ENCODE measurements at regions of chr18 and their contacts with region 1.

Region 1: DNA sequence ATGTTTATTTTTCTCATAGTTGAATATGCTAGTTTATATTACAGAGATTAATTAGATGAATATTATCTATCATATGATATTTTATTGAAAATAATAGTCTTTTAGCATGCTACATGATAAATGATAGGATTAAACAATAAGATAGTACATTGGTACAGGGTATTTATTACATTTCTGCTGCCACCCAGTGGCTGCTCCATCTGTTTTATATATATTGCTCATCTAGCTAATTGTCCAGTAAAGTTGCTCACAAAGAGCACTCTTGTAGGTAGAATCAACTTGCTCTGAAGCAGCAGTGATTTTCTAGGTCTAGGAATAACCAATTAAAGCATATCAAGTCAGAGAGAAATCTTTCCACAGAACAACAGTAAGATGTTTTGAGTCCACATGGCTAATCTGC is 183.3 kb downstream of the ASXL3 start:
- DNase-seq: peak; percentile 38
- ATAC-seq: peak; percentile 55

Region 2: DNA sequence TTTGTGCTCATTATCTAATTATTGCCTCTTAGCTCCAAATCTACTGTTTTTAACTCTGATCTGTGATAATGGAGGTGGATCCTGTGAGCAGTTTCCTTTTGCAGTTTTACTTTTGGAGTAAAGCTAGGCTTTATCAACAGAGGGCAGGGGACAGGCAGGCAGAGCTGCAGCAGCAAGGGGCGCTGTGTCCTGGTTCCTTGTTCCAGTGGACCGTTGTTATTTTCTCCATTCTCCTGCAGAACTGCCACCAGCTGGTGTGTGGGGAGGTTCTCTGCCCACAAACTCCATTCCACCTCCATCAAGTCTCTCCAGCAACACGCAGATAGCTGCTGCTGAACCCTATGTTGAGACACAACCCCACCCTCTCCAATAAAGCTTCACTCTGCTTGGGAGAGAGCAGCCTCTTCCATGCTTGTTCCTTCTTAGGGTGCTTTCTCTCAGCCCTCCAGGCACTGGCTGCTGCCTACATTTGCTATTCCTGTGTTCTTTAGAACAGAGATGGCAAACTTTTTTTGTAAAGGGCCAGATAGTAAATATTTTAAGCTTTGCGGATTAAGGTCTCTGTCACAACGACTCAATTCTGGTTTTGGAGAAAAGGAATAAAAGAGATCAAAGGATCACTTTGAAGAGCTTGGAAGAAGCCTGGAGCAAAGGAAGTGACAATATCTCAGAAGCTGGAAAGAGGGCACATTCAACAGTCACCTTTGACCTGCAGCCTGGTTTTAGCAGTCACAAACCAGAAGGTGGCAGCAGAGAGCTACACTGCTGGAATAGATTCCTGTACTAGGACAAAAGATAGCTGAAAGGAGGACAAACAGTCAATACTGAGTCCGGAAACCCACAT is 529.7 kb before region 1 on chr18:
- intact Hi-C with region 1: loop called (anchors 5 kb)
- DNase-seq: peak; percentile 47
- ATAC-seq: peak; percentile 82

Region 3: GRCh38 chr18:33440060-33441043 is 321.0 kb before region 1 on chr18 and contains the start of gene CCDC178:
- intact Hi-C with region 1: loop called (anchors 5 kb)
- DNase-seq: peak; percentile 46
- ATAC-seq: peak; percentile 95
- total RNA-seq, gene CCDC178: 0.35 TPM

Region 4: DNA sequence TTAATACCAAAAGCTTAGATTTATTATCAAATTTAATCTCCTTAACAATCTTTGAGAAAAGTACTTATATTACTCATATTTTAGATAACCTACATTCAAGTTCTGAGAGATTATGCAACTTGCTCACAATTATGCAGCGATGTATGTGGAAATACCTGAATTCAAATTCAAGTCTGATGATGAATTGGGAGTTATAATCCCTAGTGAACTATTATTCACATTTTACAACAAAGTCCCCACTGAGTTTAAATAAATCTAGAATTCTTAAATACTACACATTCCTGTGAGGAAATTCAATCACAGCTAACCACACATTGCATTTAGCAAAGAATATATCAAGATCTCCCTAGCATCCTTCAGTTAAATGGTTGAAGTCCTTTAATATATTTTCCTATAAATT is 185.0 kb after region 1 on chr18:
- intact Hi-C with region 1: no loop called
- DNase-seq: no peak
- ATAC-seq: no peak

Region 5: DNA sequence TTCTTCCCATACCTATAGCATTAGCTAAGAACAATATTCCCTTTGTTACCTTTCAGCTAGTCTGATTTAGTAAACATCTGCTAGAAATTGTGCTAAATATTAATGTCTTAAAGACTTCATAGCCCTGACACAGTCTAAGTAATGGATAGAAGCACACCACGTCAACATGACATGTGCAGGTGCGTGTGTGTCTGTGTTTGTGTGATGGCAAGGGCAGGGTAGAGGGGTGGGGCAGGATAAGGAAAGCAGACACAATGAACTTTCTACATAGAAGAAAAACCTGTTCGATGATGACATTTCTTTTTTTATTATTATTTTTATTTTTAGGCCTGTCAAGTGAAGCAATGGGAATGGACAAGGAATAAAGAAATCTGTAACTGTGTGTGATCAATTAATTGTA is 240.0 kb after region 1 on chr18:
- intact Hi-C with region 1: no loop called
- DNase-seq: no peak
- ATAC-seq: no peak